ENCODE measurements at regions of chr9 and their contacts with region 1.

Region 1: GRCh38 chr9:93566408-93567270 is 9.7 kb upstream of the PHF2 start:
- DNase-seq: peak; percentile 84 to 100
- H3K4me3 ChIP-seq: peak overlapping the region; percentile 77
- H3K27ac ChIP-seq: peak overlapping the region; percentile 66
- H3K4me1 ChIP-seq: peaks cover 11% of the 10 kb centered on the region
- H3K27me3 ChIP-seq: no peaks in the 10 kb centered on the region
- CTCF ChIP-seq: peak; percentile 90

Region 2: DNA sequence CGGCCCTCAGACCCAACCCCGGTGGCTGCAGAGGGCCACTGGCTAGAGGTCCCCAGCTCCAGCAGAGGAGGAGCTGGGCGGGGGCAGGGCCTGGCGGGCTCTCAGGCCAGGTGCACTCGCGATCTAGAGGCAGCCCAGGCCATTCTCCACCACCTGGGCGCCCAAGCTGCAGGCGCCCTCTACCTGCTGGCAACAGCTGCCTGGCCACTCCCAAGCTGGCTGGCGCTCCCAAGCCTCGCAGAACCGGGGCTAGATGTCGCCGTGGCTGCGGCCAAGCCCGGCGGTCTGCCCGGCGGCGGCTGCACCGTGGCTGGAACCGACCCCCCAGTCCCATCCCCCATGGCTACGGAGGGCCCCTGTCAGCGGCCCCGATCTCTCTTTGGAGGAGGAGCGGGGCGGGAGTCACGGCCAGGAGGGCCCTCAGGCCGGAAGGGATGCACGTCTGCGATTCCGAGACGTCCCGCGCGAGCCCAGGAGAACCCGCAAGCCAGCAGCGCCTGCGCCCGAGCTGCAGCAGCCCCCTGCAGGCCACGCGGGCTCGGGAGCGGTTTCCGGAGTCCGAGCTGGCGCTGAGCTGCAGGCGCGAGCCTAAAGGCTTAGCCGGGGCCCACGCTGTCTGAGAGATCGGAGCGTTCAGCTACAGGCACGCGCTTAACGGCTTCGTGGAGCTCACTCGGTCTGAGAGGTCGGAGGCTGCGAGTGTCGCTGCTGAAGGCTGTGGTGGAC is 757.8 kb before region 1 on chr9:
- CTCF ChIA-PET with region 1: no interaction called
- POLR2A ChIA-PET with region 1: no interaction called
- intact Hi-C with region 1: loop called (anchors 5 kb)
- DNase-seq: peak; percentile 58 to 88
- H3K4me3 ChIP-seq: peak overlapping the region; percentile 53; the same call in 1 of the 2 replicates
- H3K27ac ChIP-seq: no peak overlapping the region
- H3K4me1 ChIP-seq: no peaks in the 10 kb centered on the region
- H3K27me3 ChIP-seq: no peaks in the 10 kb centered on the region
- CTCF ChIP-seq: peak; percentile 29; the same call in 1 of the 2 replicates

Region 3: GRCh38 chr9:93095205-93096130 is 471.2 kb before region 1 on chr9:
- CTCF ChIA-PET with region 1: no interaction called
- POLR2A ChIA-PET with region 1: interaction called, 3 read pairs
- intact Hi-C with region 1: loop called (anchors 5 kb)
- DNase-seq: peak; percentile 90 to 100
- H3K4me3 ChIP-seq: peak overlapping the region; percentile 90; the same call in 1 of the 2 replicates
- H3K27ac ChIP-seq: peak overlapping the region; percentile 82
- H3K4me1 ChIP-seq: peaks cover 57% of the 10 kb centered on the region
- H3K27me3 ChIP-seq: no peaks in the 10 kb centered on the region
- CTCF ChIP-seq: no peak

Region 4: DNA sequence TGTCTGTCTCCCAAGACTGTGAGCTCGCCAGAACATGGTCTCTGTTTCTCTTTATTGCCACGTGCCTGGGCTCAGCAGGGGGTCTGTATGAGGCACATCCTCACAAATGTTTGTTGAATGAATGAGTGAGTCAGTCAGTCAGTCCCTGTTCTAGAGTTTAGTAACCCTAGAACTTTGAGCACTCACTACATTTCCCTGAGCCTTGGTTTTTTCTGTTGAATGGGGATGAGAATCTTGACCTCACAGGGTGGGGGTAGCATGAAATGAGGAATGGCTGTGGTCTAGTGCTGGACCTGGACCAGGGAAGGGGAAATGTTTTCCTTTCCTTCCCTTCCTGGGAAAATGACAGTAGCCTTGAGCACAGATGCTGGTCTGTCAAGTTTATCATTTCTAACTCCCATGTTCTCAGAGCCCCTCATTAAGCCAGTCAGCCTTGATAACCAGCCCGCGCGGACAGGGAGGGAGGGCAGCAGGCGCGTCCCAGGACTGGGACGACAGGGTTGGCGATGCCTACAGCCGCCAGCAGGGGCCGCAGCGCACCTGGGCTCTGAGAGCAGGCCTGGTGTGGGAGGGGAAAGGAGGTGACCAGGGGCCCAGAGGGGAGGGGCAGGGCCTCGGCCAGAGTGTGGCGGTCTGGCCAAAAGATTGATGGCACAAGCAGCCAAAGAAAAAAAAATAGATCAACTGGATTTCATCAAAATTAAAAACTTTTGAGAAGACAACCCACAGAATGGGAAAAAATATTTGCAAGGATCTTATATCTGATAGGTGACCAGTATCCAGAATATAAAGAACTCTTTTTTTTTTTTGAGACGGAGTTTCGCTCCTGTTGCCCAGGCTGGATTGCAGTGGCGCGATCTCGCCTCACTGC is 406.8 kb before region 1 on chr9:
- CTCF ChIA-PET with region 1: no interaction called
- POLR2A ChIA-PET with region 1: no interaction called
- intact Hi-C with region 1: loop called (anchors 2 kb)
- DNase-seq: peak; percentile 60 to 95
- H3K4me3 ChIP-seq: no peak overlapping the region
- H3K27ac ChIP-seq: no peak overlapping the region
- H3K4me1 ChIP-seq: no peaks in the 10 kb centered on the region; the same call in 1 of the 2 replicates
- H3K27me3 ChIP-seq: no peaks in the 10 kb centered on the region
- CTCF ChIP-seq: peak; percentile 98

Region 5: GRCh38 chr9:93304574-93305496 is 261.8 kb before region 1 on chr9:
- CTCF ChIA-PET with region 1: no interaction called
- POLR2A ChIA-PET with region 1: no interaction called
- intact Hi-C with region 1: no loop called
- DNase-seq: peak in 1 of 2 experiments; percentile 64
- H3K4me3 ChIP-seq: no peak overlapping the region
- H3K27ac ChIP-seq: no peak overlapping the region
- H3K4me1 ChIP-seq: no peaks in the 10 kb centered on the region
- H3K27me3 ChIP-seq: no peaks in the 10 kb centered on the region
- CTCF ChIP-seq: peak; percentile 77

Region 6: DNA sequence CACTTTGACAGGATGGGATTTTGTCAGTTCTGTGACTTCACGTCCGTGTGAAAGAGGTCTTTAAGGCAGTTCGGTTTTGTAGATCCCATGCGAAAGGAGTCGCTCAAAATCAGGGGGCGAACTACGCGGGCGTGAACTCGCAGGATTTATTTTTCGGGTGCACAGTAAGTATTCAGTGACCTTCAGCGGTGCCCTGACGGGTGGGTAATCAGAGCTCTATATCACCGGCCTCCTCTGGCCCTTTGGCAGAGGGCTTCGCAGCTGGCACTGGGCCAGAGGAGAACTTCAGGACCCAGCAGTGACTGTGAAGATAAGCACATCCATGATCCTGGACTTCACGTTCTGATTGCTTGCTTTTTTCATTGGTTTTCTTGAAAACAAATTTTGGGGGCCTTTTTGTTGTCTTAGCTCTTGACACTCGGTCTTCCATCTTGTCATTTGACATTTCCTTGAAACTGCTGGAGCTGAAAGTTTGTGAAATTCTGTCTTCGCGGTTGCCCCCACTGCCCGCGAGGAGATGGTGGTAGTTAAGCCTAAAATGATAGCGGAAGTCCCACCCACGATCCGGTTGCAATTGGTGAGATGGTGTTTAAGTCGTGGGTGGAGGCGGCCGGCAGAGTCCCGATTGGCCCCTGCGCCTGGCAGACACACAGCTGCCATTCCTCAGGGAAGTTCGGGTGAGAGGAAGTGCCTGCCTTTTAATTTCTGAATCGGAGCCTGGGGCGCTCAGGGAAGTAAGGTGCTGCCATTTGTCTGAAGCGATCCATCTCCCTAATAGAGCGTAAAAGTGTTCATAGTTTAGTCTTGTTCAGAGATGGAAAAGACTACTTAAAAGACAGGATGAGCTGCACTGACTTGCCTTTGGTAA is 113.4 kb before region 1 on chr9 and contains the start of gene FAM120AOS:
- CTCF ChIA-PET with region 1: interaction called, 7 read pairs
- POLR2A ChIA-PET with region 1: no interaction called
- intact Hi-C with region 1: loop called (anchors 5 kb)
- DNase-seq: peak; percentile 93 to 94
- H3K4me3 ChIP-seq: peak within 1 kb of the TSS; percentile 74
- H3K27ac ChIP-seq: peak within 1 kb of the TSS; percentile 42
- H3K4me1 ChIP-seq: peaks cover 31% of the 10 kb centered on the region
- H3K27me3 ChIP-seq: no peaks in the 10 kb centered on the region
- CTCF ChIP-seq: no peak
- total RNA-seq, gene FAM120AOS: 27.8 and 34.6 TPM in 2 replicates

Region 7: DNA sequence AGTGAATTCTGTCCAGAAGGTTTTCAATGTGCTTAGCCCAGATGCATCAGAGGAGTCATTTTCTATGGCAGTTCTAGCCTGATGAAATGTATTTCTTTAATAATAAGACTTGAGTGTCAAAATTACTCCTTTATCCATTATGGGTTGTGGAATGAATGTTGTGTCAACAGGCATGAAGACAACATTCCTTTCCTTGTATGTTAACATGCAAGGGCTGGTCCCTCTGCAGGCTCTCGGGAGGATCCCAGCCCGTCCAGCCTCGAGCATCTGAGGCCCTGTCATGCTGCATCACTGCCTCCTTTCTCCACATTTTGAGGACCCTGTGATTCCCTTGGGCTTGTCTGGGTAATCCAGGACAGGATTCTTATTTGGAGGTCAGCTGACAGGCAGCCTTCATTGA is 70.3 kb before region 1 on chr9:
- CTCF ChIA-PET with region 1: no interaction called
- POLR2A ChIA-PET with region 1: no interaction called
- intact Hi-C with region 1: no loop called
- DNase-seq: no peak
- H3K4me3 ChIP-seq: no peak overlapping the region
- H3K27ac ChIP-seq: no peak overlapping the region
- H3K4me1 ChIP-seq: no peaks in the 10 kb centered on the region
- H3K27me3 ChIP-seq: no peaks in the 10 kb centered on the region
- CTCF ChIP-seq: no peak

Region 8: DNA sequence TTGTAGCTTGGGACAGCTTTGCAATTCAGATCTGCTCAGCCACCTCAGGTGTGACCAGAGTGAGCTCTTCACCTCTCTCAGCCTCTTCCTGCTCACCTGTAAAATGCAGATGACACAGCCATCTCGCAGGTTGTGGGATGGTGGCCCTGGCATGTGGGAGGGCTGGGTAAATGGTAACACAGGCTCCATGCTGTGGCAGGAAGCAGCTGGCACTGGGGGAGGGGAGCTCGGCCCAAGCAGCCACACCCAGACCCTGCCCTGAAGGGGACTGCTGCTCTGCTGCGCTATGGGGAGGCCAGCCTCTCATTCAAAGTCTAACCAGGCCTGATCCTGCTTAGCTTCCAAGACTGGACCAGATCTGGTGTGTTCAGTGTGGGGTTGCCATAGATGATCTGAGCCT is 33.9 kb after region 1 on chr9:
- CTCF ChIA-PET with region 1: interaction called, 3 read pairs
- POLR2A ChIA-PET with region 1: no interaction called
- intact Hi-C with region 1: loop called (anchors 2 kb)
- DNase-seq: peak in 1 of 2 experiments; percentile 77
- H3K4me3 ChIP-seq: no peak overlapping the region
- H3K27ac ChIP-seq: no peak overlapping the region
- H3K4me1 ChIP-seq: no peaks in the 10 kb centered on the region
- H3K27me3 ChIP-seq: no peaks in the 10 kb centered on the region
- CTCF ChIP-seq: no peak

Region 9: DNA sequence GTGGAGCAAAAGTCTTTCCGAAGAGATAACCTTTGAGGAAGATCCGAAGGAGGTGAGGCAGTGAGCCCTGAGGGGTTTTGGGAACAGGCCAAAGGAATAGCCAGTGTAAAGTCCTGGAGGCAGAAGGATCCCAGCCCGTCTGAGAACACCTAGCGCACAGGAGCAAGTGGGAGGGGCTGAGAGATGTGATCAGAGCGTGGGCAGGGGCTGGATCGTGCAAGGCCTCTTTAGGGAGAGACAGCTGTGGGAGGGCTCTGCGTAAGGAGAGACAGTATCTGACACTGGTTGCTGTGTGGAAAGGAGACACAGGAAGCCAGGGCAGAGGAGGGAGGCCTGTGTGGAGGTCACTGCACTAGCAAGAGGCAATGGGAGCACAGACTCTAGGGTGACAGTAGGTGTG is 320.3 kb after region 1 on chr9:
- CTCF ChIA-PET with region 1: no interaction called
- POLR2A ChIA-PET with region 1: no interaction called
- intact Hi-C with region 1: no loop called
- DNase-seq: no peak
- H3K4me3 ChIP-seq: no peak overlapping the region
- H3K27ac ChIP-seq: no peak overlapping the region
- H3K4me1 ChIP-seq: no peaks in the 10 kb centered on the region
- H3K27me3 ChIP-seq: peaks cover 44% of the 10 kb centered on the region
- CTCF ChIP-seq: no peak